ENCODE measurements at regions of chr14 and their contacts with region 1.

Region 1: DNA sequence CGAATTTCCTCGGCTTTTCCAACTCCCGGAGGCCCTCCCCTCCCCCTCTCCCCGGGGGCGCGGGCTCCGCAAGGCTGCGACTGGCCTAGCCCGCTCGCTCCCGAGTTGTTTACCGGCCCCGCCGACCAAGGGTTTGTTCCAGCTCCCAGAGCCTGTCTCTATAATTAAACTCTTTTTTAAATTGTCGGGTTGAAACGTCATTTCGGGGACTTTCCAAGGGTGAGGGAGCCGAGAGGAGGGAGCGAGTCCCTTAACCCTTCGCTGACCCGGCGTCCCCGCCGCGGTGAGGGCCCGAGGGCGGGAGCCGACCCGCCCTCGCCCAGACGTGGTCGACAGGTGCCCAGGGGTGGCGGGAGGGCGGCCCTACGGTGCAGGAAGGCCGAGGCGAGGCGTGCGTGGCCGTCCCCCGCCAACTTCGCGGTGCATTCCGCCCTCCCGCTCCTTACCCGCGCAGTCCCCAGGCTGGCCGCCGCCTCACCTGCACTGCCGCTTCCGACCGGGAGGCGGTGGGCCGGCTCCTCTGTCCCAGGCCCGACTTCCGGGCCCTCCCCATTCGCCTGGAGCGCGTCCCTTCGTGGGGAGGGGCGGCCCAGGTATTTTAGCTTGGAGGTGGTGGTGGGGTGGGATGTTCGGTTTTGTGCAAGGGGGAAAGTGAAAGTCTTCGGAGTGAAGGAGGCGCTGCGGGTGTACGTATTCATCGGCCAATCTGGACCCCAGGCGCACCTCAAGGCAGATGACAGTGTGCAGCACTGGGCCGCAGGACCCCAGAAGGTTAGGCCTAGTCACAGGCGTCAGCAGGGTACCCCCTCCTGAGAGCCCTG is 2.9 kb upstream of the ZFP36L1 start:
- DNase-seq: peak; percentile 87 to 95 (median 95)
- ATAC-seq: peak; percentile 54 to 56
- H3K4me3 ChIP-seq: peak overlapping the region; percentile 90
- H3K27ac ChIP-seq: peak overlapping the region; percentile 100
- H3K4me1 ChIP-seq: peaks cover 4% of the 10 kb centered on the region
- H3K27me3 ChIP-seq: no peaks in the 10 kb centered on the region

Region 2: GRCh38 chr14:68548194-68549056 is 247.4 kb before region 1 on chr14:
- intact Hi-C with region 1: loop called in 2 of 4 experiments (anchors 5 to 10 kb)
- DNase-seq: peak; percentile 93 to 96 (median 95)
- ATAC-seq: peak; percentile 92 to 93
- H3K4me3 ChIP-seq: no peak overlapping the region
- H3K27ac ChIP-seq: peak overlapping the region; percentile 98
- H3K4me1 ChIP-seq: peaks cover 40% of the 10 kb centered on the region
- H3K27me3 ChIP-seq: no peaks in the 10 kb centered on the region

Region 3: GRCh38 chr14:68627880-68628607 is 167.8 kb before region 1 on chr14:
- intact Hi-C with region 1: loop called in 1 of 4 experiments (anchors 10 kb)
- DNase-seq: peak; percentile 81 to 93 (median 90)
- ATAC-seq: peak; percentile 69 to 73
- H3K4me3 ChIP-seq: peak overlapping the region; percentile 13
- H3K27ac ChIP-seq: peak overlapping the region; percentile 46
- H3K4me1 ChIP-seq: peaks cover 22% of the 10 kb centered on the region
- H3K27me3 ChIP-seq: no peaks in the 10 kb centered on the region

Region 4: DNA sequence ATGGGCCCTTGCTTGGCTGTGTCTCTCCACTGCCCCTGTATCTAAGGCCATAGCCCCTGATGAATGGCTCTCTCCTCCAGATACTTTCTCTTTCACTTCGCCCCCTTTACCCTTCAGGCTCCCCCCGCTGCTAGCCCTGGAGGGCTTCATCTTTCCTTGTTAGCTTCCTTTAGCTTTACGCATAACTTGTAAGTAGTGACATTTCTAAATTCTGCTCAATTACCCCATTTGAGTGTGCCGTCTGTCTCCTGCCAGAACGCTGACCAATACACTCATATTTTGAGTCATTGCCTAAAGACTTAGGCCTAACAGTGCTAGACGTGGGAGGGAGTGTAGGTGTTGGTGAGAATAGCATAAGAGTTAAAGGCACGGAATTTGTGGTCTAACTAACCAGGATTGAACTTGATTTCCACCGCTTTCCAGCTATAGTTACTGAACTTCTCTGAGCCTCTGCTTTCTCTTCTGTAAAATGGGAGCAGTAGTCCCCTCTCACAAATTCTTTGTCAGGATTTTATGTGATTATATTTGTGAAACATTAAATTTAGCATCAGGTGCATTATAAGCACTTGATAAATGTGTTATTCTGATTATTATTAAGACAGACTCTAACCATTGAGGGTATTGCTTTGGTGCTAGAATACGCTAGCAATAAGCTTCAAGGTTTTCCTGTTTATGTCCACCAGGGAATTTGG is 132.3 kb before region 1 on chr14:
- intact Hi-C with region 1: loop called in 1 of 4 experiments (anchors 10 kb)
- DNase-seq: no peak
- ATAC-seq: no peak
- H3K4me3 ChIP-seq: no peak overlapping the region
- H3K27ac ChIP-seq: no peak overlapping the region
- H3K4me1 ChIP-seq: peaks cover 12% of the 10 kb centered on the region
- H3K27me3 ChIP-seq: no peaks in the 10 kb centered on the region

Region 5: GRCh38 chr14:68939893-68940613 is 144.2 kb after region 1 on chr14:
- intact Hi-C with region 1: no loop called
- DNase-seq: peak; percentile 90 to 93 (median 93)
- ATAC-seq: peak; percentile 80 to 86
- H3K4me3 ChIP-seq: no peak overlapping the region
- H3K27ac ChIP-seq: peak overlapping the region; percentile 75
- H3K4me1 ChIP-seq: peaks cover 54% of the 10 kb centered on the region
- H3K27me3 ChIP-seq: no peaks in the 10 kb centered on the region

Measured in right cardiac atrium (tissue), 5 donors.